HCT116 (cell line): ENCODE measurements at regions of chr9 and their contacts with region 1.

Region 1: DNA sequence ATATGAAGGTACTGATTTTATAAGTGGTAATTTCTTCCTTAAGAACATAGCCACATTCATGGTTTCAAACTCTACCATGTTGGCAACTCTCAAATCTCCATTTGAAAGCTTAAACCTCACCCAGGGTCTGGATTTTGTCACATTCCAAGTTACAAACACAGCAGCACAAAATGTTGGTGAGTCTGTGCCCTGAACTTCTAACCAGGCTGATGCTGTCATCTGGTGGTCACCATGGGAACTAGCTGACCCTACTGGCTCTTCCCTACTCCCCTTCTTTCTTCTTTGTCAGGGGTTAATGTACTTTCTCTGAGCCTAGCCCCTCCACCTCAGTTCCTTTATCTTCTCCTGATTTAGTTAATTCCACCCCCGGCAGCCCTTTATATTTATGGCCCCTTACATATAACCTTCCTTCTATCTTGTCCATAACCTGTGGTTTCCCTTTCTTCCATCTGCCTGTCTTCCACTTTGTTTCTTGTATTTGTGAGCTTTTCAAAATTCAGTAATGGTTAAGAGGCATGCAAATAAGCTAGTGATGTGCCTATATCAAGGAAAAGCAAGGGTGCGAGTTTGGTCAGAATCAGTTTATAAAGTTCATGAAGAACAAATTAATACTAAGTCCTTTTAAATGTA is 35.9 kb downstream of the TGFBR1 start:
- DNase-seq: peak; percentile 21
- ATAC-seq: peak; percentile 80
- H3K4me3 ChIP-seq: no peak overlapping the region
- H3K27ac ChIP-seq: no peak overlapping the region
- H3K4me1 ChIP-seq: no peaks in the 10 kb centered on the region
- H3K27me3 ChIP-seq: no peaks in the 10 kb centered on the region
- CTCF ChIP-seq: peak; percentile 73 to 74 (median 73)
- POLR2A ChIP-seq: no peak
- RAD21 ChIP-seq: peak; percentile 85

Region 2: GRCh38 chr9:97873877-97874276 is 1266.9 kb before region 1 on chr9:
- CTCF ChIA-PET with region 1: no interaction called
- POLR2A ChIA-PET with region 1: no interaction called
- RAD21 ChIA-PET with region 1: no interaction called
- intact Hi-C with region 1: no loop called
- DNase-seq: no peak
- ATAC-seq: peak; percentile 76
- H3K4me3 ChIP-seq: no peak overlapping the region
- H3K27ac ChIP-seq: no peak overlapping the region
- H3K4me1 ChIP-seq: peaks cover 0 to 7% of the 10 kb centered on the region in 2 experiments; a peak in 2 of 4 replicates
- H3K27me3 ChIP-seq: no peaks in the 10 kb centered on the region
- CTCF ChIP-seq: no peak
- POLR2A ChIP-seq: no peak
- RAD21 ChIP-seq: no peak

Region 3: GRCh38 chr9:98807070-98807810 is 333.6 kb before region 1 on chr9 and contains the start of gene GALNT12:
- CTCF ChIA-PET with region 1: interaction called, 12 read pairs
- POLR2A ChIA-PET with region 1: no interaction called
- RAD21 ChIA-PET with region 1: no interaction called
- intact Hi-C with region 1: loop called (anchors 2 kb)
- DNase-seq: no peak
- ATAC-seq: peak; percentile 76
- H3K4me3 ChIP-seq: peak within 1 kb of the TSS; percentile 68 to 79
- H3K27ac ChIP-seq: peak within 1 kb of the TSS; percentile 66
- H3K4me1 ChIP-seq: peaks cover 31 to 52% of the 10 kb centered on the region in 2 experiments
- H3K27me3 ChIP-seq: no peaks in the 10 kb centered on the region
- CTCF ChIP-seq: no peak
- POLR2A ChIP-seq: peak; percentile 38
- RAD21 ChIP-seq: no peak
- total RNA-seq, gene GALNT12: 31.2 TPM

Region 4: DNA sequence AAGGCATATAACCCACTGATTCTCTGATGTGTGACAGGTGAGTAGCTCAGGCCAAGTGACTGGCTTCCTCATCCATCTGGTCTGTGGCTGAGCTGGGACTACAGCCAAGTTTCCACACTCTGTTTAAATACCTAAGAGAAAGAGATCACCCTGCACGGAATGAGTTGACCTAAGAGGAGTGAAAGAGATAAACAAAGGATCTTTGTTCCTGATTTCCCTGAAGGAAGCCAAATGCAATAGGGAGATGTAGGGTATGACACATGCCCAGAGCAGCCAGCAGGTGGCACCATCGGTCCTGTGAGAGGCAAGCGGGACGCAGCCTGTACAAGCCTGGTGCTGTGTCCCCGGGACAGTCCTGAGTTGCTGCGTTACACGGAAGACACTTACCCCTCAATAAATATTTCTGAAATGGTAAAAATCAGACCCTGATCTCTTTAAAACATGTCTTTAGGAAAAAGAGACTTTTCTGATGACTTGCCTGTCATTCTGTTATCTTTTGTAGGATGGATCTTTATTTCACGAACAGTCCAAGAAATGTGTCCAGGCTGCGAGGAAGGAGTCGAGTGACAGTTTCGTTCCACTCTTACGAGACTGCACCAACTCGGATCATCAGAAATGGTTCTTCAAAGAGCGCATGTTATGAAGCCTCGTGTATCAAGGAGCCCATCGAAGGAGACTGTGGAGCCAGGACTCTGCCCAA is 292.2 kb before region 1 on chr9:
- CTCF ChIA-PET with region 1: interaction called, 8 read pairs
- POLR2A ChIA-PET with region 1: no interaction called
- RAD21 ChIA-PET with region 1: no interaction called
- intact Hi-C with region 1: loop called (anchors 1 kb)
- DNase-seq: peak; percentile 93
- ATAC-seq: peak; percentile 97
- H3K4me3 ChIP-seq: no peak overlapping the region
- H3K27ac ChIP-seq: no peak overlapping the region
- H3K4me1 ChIP-seq: peaks cover 9 to 39% of the 10 kb centered on the region in 2 experiments; a peak in 3 of 4 replicates
- H3K27me3 ChIP-seq: no peaks in the 10 kb centered on the region
- CTCF ChIP-seq: peak; percentile 90 to 93 (median 91)
- POLR2A ChIP-seq: no peak
- RAD21 ChIP-seq: peak; percentile 97

Region 5: GRCh38 chr9:98860871-98861293 is 279.9 kb before region 1 on chr9:
- CTCF ChIA-PET with region 1: no interaction called
- POLR2A ChIA-PET with region 1: no interaction called
- RAD21 ChIA-PET with region 1: no interaction called
- intact Hi-C with region 1: loop called (anchors 2 kb)
- DNase-seq: no peak
- ATAC-seq: no peak
- H3K4me3 ChIP-seq: no peak overlapping the region
- H3K27ac ChIP-seq: no peak overlapping the region
- H3K4me1 ChIP-seq: peaks cover 0 to 8% of the 10 kb centered on the region in 2 experiments; a peak in 1 of 4 replicates
- H3K27me3 ChIP-seq: no peaks in the 10 kb centered on the region
- CTCF ChIP-seq: peak in 2 of 3 experiments; percentile 19 to 46; a peak in 1 of 6 replicates
- POLR2A ChIP-seq: no peak
- RAD21 ChIP-seq: peak; percentile 76

Region 6: DNA sequence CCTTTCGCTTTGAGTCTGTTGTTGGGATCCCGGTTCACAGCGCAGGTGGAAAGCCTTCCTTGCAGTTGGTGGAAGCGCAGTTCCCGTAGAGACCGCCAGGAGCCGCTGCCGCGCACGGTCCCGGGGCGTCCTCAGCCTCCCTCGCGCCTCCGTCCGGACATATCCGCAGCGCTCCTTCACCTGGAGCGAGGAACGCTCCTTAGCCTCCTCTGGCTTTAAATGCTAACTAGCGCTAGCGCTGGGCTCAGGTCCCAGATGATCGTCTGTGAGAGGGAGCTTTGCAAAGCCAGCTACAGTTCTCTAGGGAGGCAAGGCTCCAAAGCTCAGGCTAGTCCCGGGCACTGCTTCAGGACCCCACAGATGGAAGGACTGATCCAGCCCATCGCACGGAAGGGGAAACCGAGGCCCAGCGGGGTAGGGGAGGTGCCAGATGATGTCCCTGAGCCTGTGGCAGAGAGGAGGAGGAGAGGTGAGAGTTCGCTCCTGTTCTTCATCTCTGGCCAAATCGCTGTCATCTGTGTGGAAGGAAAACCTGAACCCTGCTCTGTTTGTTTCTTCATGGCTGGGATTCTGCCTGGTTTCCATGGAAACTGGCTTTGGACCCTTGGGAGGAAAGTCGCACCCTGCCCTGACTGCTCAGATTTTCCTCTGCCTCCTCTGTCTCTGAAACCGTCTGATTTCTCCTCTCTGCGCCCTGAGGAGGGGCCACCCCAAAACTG is 165.6 kb before region 1 on chr9:
- CTCF ChIA-PET with region 1: no interaction called
- POLR2A ChIA-PET with region 1: no interaction called
- RAD21 ChIA-PET with region 1: no interaction called
- intact Hi-C with region 1: loop called (anchors 1 kb)
- DNase-seq: peak; percentile 61
- ATAC-seq: peak; percentile 94
- H3K4me3 ChIP-seq: peak overlapping the region; percentile 11 to 48
- H3K27ac ChIP-seq: no peak overlapping the region
- H3K4me1 ChIP-seq: peaks cover 0 to 16% of the 10 kb centered on the region in 2 experiments; a peak in 2 of 4 replicates
- H3K27me3 ChIP-seq: no peaks in the 10 kb centered on the region
- CTCF ChIP-seq: peak; percentile 91 to 98 (median 97)
- POLR2A ChIP-seq: no peak
- RAD21 ChIP-seq: peak; percentile 77

Region 7: DNA sequence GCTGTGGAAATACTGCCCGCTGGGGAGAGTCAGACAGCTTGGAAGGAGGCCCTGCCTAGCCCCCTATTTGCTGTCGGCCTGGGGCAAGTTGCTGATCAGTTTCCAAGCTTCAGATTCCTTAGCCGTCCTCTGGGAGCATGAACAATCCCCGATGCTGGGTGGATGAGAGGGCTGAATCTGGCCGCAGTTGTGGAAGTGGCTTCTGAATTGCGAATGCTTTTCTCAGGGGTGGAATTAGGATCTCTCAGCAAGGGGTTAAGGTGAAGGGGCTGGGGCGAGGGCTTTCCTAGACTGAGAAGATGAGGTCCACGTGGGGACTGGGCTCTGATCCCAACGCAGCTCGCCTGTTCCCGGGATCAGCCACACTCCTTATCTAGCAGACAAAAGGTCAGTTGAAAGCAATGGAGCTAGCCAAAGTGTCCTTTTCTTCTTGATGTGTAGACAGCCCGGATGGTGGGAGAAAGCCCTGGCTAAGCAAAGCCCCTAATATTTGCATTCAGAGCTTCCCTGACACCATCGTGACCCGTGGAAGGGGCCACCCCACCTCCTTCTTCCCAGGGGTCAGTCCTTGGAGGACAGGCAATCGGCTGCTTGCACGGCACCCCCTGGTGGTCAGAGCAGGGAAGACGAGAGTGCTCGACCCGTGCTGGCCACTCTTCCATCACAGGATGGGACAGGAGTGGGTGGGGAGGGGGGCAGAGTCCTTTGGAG is 142.2 kb before region 1 on chr9:
- CTCF ChIA-PET with region 1: interaction called, 4 read pairs
- POLR2A ChIA-PET with region 1: no interaction called
- RAD21 ChIA-PET with region 1: interaction called in 1 of 2 experiments, 3 read pairs
- intact Hi-C with region 1: loop called (anchors 1 kb)
- DNase-seq: peak; percentile 54
- ATAC-seq: peak; percentile 99
- H3K4me3 ChIP-seq: no peak overlapping the region
- H3K27ac ChIP-seq: no peak overlapping the region
- H3K4me1 ChIP-seq: peaks cover 0 to 3% of the 10 kb centered on the region in 2 experiments; a peak in 1 of 4 replicates
- H3K27me3 ChIP-seq: peaks cover 6% of the 10 kb centered on the region; the same call in 1 of the 2 replicates
- CTCF ChIP-seq: peak; percentile 85 to 91 (median 88)
- POLR2A ChIP-seq: no peak
- RAD21 ChIP-seq: peak; percentile 86

Region 8: DNA sequence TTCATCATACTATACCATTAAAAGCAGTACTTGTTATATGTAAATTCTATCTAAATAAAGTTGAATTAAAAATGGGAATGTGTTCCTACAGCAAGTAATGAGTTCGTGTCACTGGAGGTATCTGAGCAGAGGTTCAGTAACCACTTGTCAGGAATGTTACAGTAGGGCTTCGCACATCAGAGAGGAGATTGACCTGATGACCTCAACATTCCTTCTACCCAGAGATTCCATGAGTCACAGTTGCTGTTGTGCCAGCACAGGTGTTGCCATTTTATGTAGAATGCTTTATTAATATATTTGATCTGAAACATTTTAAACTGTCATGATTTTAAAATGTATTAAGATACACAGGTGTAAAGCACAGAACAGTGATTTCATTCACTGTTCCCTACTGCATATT is 825.9 kb after region 1 on chr9:
- CTCF ChIA-PET with region 1: no interaction called
- POLR2A ChIA-PET with region 1: no interaction called
- RAD21 ChIA-PET with region 1: no interaction called
- intact Hi-C with region 1: no loop called
- DNase-seq: peak; percentile 76
- ATAC-seq: peak; percentile 99
- H3K4me3 ChIP-seq: no peak overlapping the region
- H3K27ac ChIP-seq: no peak overlapping the region; the same call in 1 of the 2 replicates
- H3K4me1 ChIP-seq: peaks cover 15 to 18% of the 10 kb centered on the region in 2 experiments
- H3K27me3 ChIP-seq: no peaks in the 10 kb centered on the region
- CTCF ChIP-seq: no peak
- POLR2A ChIP-seq: no peak
- RAD21 ChIP-seq: 0 out of 2 replicates have a peak, but pooled peaks have one; percentile 12